Heart left ventricle (tissue), 16 donors: ENCODE measurements at regions of chr18 and their contacts with region 1.

Region 1: GRCh38 chr18:21004726-21005125 is 106.9 kb downstream of the ROCK1 start:
- DNase-seq: peak in 2 of 5 donors; percentile 21 to 38
- ATAC-seq: peak; percentile 88 to 95 (median 92)
- H3K4me3 ChIP-seq: no peak overlapping the region
- H3K27ac ChIP-seq: peak overlapping the region; percentile 6 to 78 (median 56)
- H3K4me1 ChIP-seq: peaks cover 0 to 31% (median 18%) of the 10 kb centered on the region in 12 donors
- H3K27me3 ChIP-seq: no peaks in the 10 kb centered on the region
- CTCF ChIP-seq: no peak
- POLR2A ChIP-seq: no peak

Region 2: DNA sequence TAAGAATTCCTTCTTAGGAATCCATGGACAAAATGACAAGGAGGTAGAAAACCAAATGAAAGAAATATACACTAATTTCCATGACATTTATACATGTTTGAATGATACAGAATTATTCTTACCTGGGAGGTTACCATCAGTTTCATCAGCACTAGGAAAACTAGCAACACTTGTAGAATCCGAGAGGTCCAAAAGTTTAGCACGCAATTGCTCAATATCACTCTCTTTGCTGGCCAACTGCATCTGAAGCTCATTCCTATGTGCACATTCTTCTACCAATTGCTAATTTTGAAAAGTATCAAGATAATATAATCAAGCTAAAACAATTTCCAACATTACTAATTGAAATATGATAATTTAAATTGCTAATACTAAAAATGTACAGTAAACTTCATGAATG is 37.9 kb before region 1 on chr18:
- intact Hi-C with region 1: loop called in 2 of 10 experiments (anchors 2 to 5 kb)
- DNase-seq: no peak
- ATAC-seq: no peak
- H3K4me3 ChIP-seq: no peak overlapping the region
- H3K27ac ChIP-seq: no peak overlapping the region
- H3K4me1 ChIP-seq: no peaks in the 10 kb centered on the region
- H3K27me3 ChIP-seq: no peaks in the 10 kb centered on the region
- CTCF ChIP-seq: no peak
- POLR2A ChIP-seq: no peak

Region 3: GRCh38 chr18:21064347-21064746 is 59.6 kb after region 1 on chr18:
- intact Hi-C with region 1: loop called in 1 of 10 experiments (anchors 10 kb)
- DNase-seq: no peak
- ATAC-seq: no peak
- H3K4me3 ChIP-seq: no peak overlapping the region
- H3K27ac ChIP-seq: no peak overlapping the region
- H3K4me1 ChIP-seq: no peaks in the 10 kb centered on the region
- H3K27me3 ChIP-seq: no peaks in the 10 kb centered on the region
- CTCF ChIP-seq: no peak
- POLR2A ChIP-seq: no peak